Heart left ventricle (tissue), 16 donors: ENCODE measurements at regions of chr1 and their contacts with region 1.

Region 1: DNA sequence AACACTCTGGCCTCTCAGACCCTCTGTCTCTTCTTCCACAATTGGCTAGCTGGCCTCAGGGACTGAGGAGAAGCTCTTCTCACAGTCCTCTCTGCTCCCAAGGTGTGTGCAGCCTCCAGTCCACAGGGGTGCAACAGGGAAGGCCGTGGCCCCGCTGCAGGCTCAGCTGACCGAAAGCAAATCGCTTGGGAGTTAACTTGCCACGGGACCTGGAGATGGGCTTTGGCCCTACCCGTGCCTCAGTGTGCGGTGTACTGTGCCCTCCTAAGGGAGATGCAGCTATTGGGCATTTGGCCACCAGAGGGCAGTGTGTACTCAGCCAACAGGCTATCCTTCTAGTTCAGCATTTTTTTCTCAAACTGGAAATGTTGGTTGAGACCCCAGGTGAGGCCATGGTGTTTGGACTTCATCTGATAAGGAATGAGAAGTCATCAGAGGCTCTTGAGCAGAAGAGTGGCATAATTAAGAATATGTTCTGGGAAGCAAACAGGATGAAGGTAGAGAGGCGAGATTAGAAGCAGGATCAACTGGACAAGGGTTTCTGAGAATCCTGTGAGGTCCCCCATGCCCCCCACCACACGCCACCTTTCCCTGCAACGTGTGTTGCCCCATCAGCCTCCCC is 42.5 kb upstream of the TMEM125 start:
- DNase-seq: peak; percentile 74 to 87 (median 79)
- ATAC-seq: peak; percentile 77 to 86 (median 83)
- H3K4me3 ChIP-seq: no peak overlapping the region
- H3K27ac ChIP-seq: no peak overlapping the region
- H3K4me1 ChIP-seq: peaks cover 0 to 9% (median under 1%) of the 10 kb centered on the region in 12 donors
- H3K27me3 ChIP-seq: no peaks in the 10 kb centered on the region
- CTCF ChIP-seq: peak; percentile 88 to 98 (median 94)
- POLR2A ChIP-seq: no peak

Region 2: GRCh38 chr1:43021547-43022474 is 205.4 kb before region 1 on chr1:
- intact Hi-C with region 1: no loop called
- DNase-seq: no peak
- ATAC-seq: no peak
- H3K4me3 ChIP-seq: no peak overlapping the region
- H3K27ac ChIP-seq: no peak overlapping the region
- H3K4me1 ChIP-seq: no peaks in the 10 kb centered on the region
- H3K27me3 ChIP-seq: no peaks in the 10 kb centered on the region
- CTCF ChIP-seq: no peak
- POLR2A ChIP-seq: no peak

Region 3: GRCh38 chr1:43383449-43383848 is 156.2 kb after region 1 on chr1:
- intact Hi-C with region 1: loop called in 5 of 10 experiments (anchors 2 to 10 kb)
- DNase-seq: no peak
- ATAC-seq: peak in 3 of 4 donors; percentile 30 to 70 (median 53)
- H3K4me3 ChIP-seq: no peak overlapping the region
- H3K27ac ChIP-seq: peak overlapping the region in 2 of 12 donors; percentile 18 to 44
- H3K4me1 ChIP-seq: peaks cover 2 to 36% (median 25%) of the 10 kb centered on the region in 12 donors
- H3K27me3 ChIP-seq: no peaks in the 10 kb centered on the region
- CTCF ChIP-seq: peak in 8 of 12 donors; percentile 24 to 50 (median 38)
- POLR2A ChIP-seq: no peak

Region 4: DNA sequence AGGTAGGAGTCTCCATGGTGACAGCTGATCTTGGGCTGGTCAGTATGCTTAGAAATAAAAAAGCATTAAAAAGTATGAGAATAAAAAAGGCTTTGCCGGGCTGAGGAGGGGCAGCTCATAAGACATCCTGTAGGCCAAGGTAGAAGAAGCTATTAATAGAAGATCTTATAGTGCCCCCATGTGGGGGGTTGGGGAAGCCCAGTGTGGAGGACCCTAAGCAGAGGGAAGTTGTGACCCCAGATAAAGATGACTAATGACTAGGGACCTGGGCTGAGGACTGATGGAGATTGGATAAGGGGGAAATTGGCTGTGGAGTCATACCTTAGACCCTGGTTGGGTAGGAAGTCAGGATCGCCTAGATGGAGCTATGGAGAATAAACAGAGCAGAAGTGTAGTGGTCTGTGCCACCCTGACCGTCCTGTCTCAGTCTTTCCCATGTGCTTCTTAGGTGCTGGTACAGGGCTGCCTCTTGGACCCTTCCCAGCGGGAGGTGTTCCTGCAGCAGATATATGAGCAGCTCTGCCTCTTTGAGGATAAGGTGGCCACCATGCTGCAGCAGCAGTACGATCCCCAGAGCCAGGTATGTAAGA is 187.5 kb after region 1 on chr1:
- intact Hi-C with region 1: loop called in 9 of 10 experiments (anchors 1 to 5 kb)
- DNase-seq: peak in 2 of 5 donors; percentile 36 to 44
- ATAC-seq: peak; percentile 77 to 86 (median 78)
- H3K4me3 ChIP-seq: no peak overlapping the region
- H3K27ac ChIP-seq: no peak overlapping the region
- H3K4me1 ChIP-seq: peaks cover 0 to 7% (median 0%) of the 10 kb centered on the region in 12 donors
- H3K27me3 ChIP-seq: no peaks in the 10 kb centered on the region
- CTCF ChIP-seq: peak; percentile 52 to 74 (median 64)
- POLR2A ChIP-seq: no peak

Region 5: DNA sequence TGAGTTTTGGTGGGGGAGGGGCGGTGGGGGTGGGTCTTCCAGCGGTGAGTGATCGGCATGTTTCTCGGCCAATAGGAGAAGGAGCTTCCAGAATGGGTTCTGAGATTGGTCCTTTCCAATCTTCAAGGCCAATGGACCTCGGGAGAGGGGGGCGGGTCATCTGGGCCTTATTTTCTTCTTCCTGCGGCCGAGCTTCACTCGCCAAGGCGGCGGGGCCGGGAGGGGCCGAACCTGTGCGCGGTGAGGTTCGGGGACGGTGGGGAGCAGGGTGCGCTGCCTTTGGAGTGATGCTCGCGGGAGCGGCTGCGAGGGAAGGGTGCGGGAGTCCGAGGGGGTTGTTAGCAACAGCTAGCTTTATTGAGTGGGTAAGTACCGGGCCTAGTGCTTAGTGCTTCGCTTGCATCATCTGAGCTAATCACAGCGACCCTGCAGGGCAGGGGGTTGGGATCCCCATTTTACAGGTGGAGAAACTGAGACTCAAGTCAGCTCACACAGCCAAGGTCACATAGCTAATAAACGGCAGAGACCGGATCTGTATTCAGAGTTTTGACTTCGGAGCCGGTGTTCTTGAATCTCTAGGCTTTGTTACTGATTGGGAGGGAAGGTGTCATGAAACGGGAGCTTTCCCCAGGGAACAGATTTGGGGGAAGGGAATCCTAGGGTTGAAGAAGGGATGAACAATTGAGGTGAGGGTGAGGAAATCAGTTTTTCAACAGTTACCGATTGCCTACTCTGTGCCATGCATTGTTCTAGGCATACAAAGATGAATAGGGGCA is 423.2 kb after region 1 on chr1:
- intact Hi-C with region 1: loop called in 1 of 10 experiments (anchors 5 kb)
- DNase-seq: peak; percentile 94 to 97 (median 97)
- ATAC-seq: peak; percentile 86 to 92 (median 92)
- H3K4me3 ChIP-seq: peak overlapping the region; percentile 65 to 92 (median 82)
- H3K27ac ChIP-seq: peak overlapping the region in 11 of 12 donors; percentile 87 to 97 (median 94)
- H3K4me1 ChIP-seq: peaks cover 8 to 35% (median 15%) of the 10 kb centered on the region in 12 donors
- H3K27me3 ChIP-seq: no peaks in the 10 kb centered on the region
- CTCF ChIP-seq: no peak
- POLR2A ChIP-seq: peak; percentile 89 to 97